WTC11 (cell line): ENCODE measurements at regions of chr6 and their contacts with region 1.

Region 1: GRCh38 chr6:34459899-34460593 is 5.8 kb upstream of the PACSIN1 start:
- DNase-seq: peak; percentile 63
- ATAC-seq: peak; percentile 52
- H3K4me3 Mint-ChIP-seq: no peak overlapping the region
- H3K27ac Mint-ChIP-seq: no peak overlapping the region
- H3K4me1 Mint-ChIP-seq: peaks cover 26% of the 10 kb centered on the region
- H3K27me3 Mint-ChIP-seq: peaks cover 4% of the 10 kb centered on the region
- CTCF ChIP-seq: peak; percentile 72

Region 2: DNA sequence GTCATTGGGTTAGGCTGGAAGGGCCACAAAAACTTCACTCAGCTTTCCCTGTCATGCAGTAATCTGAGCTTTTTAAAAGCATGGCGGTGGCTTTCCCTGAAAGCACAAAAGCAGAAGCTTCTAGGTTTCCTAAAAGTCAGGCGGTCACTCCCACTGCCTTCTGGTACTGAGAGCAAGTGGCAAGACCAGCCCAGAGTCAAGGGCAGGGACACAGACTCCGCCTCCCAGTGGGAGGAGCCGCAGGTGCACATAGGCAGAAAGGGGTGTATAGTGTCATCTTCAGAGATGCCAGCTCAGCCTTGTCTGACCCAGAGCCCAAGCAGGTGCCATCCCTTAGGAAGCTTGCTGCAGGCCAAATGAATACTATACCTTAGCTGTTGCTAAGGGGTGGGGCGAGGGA is 12.1 kb before region 1 on chr6:
- CTCF ChIA-PET with region 1: interaction called, 11 read pairs
- POLR2A ChIA-PET with region 1: no interaction called
- DNase-seq: peak; percentile 69
- ATAC-seq: peak; percentile 96
- H3K4me3 Mint-ChIP-seq: no peak overlapping the region
- H3K27ac Mint-ChIP-seq: peak overlapping the region; percentile 71; the same call in 1 of the 2 replicates
- H3K4me1 Mint-ChIP-seq: peaks cover 12% of the 10 kb centered on the region
- H3K27me3 Mint-ChIP-seq: no peaks in the 10 kb centered on the region
- CTCF ChIP-seq: no peak

Region 3: GRCh38 chr6:34476447-34476846 is 16.4 kb after region 1 on chr6:
- CTCF ChIA-PET with region 1: interaction called, 17 read pairs
- POLR2A ChIA-PET with region 1: interaction called, 7 read pairs
- DNase-seq: no peak
- ATAC-seq: peak; percentile 43; the same call in 1 of the 2 replicates
- H3K4me3 Mint-ChIP-seq: no peak overlapping the region
- H3K27ac Mint-ChIP-seq: no peak overlapping the region
- H3K4me1 Mint-ChIP-seq: peaks cover 4% of the 10 kb centered on the region; the same call in 1 of the 2 replicates
- H3K27me3 Mint-ChIP-seq: no peaks in the 10 kb centered on the region; the same call in 1 of the 2 replicates
- CTCF ChIP-seq: no peak

Region 4: DNA sequence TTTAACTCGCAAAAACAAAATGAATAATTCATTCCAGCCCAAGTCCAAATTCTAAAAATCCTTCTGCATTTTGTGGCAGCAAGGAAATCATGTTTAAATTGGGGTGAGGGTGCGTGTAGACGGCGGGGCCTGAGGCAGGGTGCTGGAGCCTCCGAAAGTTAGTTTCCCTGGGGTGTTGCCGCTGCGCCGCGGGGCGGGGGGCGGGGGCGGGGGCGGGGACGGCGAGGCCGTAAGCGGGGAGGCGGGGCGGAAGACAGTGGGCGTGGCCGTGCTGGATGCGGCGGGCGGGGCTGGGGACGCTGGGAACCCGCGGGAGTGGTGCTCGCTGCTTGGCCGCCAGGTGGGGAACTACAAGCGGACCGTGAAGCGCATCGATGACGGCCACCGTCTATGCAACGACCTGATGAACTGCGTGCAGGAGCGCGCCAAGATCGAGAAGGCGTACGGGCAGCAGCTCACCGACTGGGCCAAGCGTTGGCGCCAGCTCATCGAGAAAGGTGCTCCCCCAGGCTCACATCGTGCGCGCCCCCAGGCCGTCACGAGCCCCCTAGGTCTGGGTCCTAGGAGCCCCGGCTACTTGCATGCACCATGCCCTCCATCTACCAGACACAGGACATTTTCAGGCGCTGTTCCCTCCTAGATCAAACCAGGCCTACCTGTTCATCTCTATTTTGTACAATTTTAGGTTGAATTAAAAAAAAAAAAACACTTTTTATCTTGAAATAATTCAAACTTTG is 67.1 kb after region 1 on chr6:
- CTCF ChIA-PET with region 1: interaction called, 12 read pairs
- POLR2A ChIA-PET with region 1: no interaction called
- DNase-seq: peak; percentile 96
- ATAC-seq: peak; percentile 72
- H3K4me3 Mint-ChIP-seq: peak overlapping the region; percentile 66
- H3K27ac Mint-ChIP-seq: no peak overlapping the region
- H3K4me1 Mint-ChIP-seq: peaks cover 25% of the 10 kb centered on the region
- H3K27me3 Mint-ChIP-seq: no peaks in the 10 kb centered on the region
- CTCF ChIP-seq: peak; percentile 52

Region 5: DNA sequence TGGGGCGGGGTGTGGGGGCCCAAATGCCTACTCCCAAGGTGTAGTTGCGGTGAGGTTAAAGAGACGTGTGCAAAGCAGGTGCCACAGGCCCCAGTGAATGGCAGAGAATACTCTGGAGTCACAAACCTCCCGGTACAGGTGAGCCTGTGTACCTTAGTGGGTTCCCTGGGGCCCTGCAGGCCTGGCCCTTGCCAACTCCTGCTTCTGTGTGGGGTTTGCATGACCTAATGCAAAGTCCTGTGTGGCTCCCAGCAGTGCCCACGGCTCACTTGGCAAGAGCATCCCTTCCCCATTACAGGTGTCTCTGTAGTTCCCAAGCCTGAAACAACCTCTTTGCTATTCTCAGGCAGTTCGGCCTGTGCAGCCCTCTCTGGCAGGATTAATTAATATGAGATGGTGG is 78.5 kb after region 1 on chr6:
- CTCF ChIA-PET with region 1: interaction called, 12 read pairs
- POLR2A ChIA-PET with region 1: no interaction called
- DNase-seq: no peak
- ATAC-seq: no peak
- H3K4me3 Mint-ChIP-seq: no peak overlapping the region
- H3K27ac Mint-ChIP-seq: no peak overlapping the region
- H3K4me1 Mint-ChIP-seq: no peaks in the 10 kb centered on the region
- H3K27me3 Mint-ChIP-seq: no peaks in the 10 kb centered on the region; the same call in 1 of the 2 replicates
- CTCF ChIP-seq: no peak

Region 6: GRCh38 chr6:34575326-34575725 is 115.3 kb after region 1 on chr6:
- CTCF ChIA-PET with region 1: interaction called, 15 read pairs
- POLR2A ChIA-PET with region 1: no interaction called
- DNase-seq: peak; percentile 38
- ATAC-seq: peak; percentile 55
- H3K4me3 Mint-ChIP-seq: no peak overlapping the region
- H3K27ac Mint-ChIP-seq: peak overlapping the region; percentile 82; the same call in 1 of the 2 replicates
- H3K4me1 Mint-ChIP-seq: peaks cover 16% of the 10 kb centered on the region
- H3K27me3 Mint-ChIP-seq: no peaks in the 10 kb centered on the region; the same call in 1 of the 2 replicates
- CTCF ChIP-seq: no peak

Region 7: DNA sequence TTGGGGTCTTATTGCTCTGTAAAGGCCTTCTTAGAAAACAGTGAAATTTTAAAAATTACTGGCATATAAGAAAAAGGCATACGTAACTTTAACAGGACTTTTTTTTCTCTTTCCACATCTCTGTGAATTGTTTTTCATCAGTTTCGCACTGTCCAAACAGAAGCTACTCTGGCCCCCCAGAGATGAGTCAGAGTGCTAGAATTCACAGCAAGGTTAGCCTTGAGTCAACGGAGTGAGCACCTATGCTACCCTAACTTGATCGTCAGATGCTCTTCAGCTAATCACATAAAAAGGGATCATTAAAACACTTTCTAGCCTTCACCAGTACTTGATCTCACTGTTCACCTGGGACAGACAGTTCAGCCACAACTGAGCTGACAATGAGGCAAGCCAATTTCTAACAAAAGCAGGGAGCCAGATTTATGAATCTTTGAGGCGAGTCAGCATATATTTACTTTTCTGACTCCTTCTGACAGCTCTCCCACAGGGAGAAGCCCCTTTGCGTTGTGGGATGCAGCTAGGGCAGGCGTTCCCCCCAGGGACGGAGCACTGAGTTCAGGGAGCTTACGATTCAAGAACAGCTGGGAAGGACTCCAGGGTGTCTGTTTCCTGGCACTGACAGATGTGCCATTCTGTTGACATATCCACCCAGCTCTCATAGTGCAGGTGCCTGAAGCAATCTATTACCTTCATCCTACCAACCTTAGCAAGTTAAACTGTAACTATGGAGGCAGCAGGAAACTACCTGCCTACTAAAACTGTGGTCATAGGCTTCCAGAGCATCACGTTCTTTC is 142.5 kb after region 1 on chr6:
- CTCF ChIA-PET with region 1: interaction called, 102 read pairs
- POLR2A ChIA-PET with region 1: no interaction called
- DNase-seq: no peak
- ATAC-seq: no peak; the same call in 1 of the 2 replicates
- H3K4me3 Mint-ChIP-seq: no peak overlapping the region
- H3K27ac Mint-ChIP-seq: peak overlapping the region; percentile 9; the same call in 1 of the 2 replicates
- H3K4me1 Mint-ChIP-seq: peaks cover 31% of the 10 kb centered on the region
- H3K27me3 Mint-ChIP-seq: no peaks in the 10 kb centered on the region
- CTCF ChIP-seq: no peak